Activated naive CD8-positive, alpha-beta T cell treated with anti-CD3 and anti-CD28 coated beads, Interleukin-2, amount 10 ng/mL, durations not matched to agents 7 days and 5 days (primary cell): ENCODE measurements at regions of chr19 and their contacts with region 1.

Region 1: DNA sequence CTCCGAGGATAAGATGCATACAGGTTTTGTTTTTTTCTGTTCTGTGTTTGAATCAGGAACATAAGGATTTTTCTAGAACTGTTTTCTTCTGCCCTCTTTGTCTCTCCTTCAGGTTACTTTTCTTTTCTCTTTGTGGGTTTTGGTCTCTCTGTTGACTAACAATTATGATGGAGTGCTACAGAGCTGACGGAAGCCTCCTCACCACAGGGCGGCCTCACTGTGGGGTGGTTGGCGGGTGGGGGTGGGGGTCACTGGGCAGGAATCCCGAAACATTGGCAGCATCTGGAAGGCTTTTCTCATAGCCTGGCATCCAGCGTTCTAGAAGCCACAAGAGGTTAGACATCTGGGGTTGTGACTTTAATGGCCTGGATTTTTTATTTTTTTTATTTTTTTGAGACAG is 12.0 kb upstream of the MATK start:
- DNase-seq: no peak
- ATAC-seq: peak; percentile 69
- H3K4me3 Mint-ChIP-seq: peak overlapping the region; percentile 70
- H3K27ac Mint-ChIP-seq: peak overlapping the region; percentile 72
- H3K4me1 Mint-ChIP-seq: peaks cover 20% of the 10 kb centered on the region
- H3K27me3 Mint-ChIP-seq: peaks cover 2% of the 10 kb centered on the region

Region 2: GRCh38 chr19:3810708-3811355 is 12.7 kb after region 1 on chr19:
- POLR2A ChIA-PET with region 1: interaction called, 33 read pairs
- DNase-seq: no peak
- ATAC-seq: no peak
- H3K4me3 Mint-ChIP-seq: no peak overlapping the region
- H3K27ac Mint-ChIP-seq: no peak overlapping the region
- H3K4me1 Mint-ChIP-seq: peaks cover 31% of the 10 kb centered on the region
- H3K27me3 Mint-ChIP-seq: no peaks in the 10 kb centered on the region

Region 3: GRCh38 chr19:3868770-3869456 is 70.8 kb after region 1 on chr19 and contains the start of gene ZFR2:
- POLR2A ChIA-PET with region 1: no interaction called
- DNase-seq: peak; percentile 36
- ATAC-seq: peak; percentile 36
- H3K4me3 Mint-ChIP-seq: no peak within 1 kb of the TSS
- H3K27ac Mint-ChIP-seq: no peak within 1 kb of the TSS
- H3K4me1 Mint-ChIP-seq: no peaks in the 10 kb centered on the region
- H3K27me3 Mint-ChIP-seq: peaks cover 42% of the 10 kb centered on the region
- total RNA-seq, gene ZFR2: 0.55 to 0.91 TPM